ENCODE measurements at regions of chr7 and their contacts with region 1.

Region 1: DNA sequence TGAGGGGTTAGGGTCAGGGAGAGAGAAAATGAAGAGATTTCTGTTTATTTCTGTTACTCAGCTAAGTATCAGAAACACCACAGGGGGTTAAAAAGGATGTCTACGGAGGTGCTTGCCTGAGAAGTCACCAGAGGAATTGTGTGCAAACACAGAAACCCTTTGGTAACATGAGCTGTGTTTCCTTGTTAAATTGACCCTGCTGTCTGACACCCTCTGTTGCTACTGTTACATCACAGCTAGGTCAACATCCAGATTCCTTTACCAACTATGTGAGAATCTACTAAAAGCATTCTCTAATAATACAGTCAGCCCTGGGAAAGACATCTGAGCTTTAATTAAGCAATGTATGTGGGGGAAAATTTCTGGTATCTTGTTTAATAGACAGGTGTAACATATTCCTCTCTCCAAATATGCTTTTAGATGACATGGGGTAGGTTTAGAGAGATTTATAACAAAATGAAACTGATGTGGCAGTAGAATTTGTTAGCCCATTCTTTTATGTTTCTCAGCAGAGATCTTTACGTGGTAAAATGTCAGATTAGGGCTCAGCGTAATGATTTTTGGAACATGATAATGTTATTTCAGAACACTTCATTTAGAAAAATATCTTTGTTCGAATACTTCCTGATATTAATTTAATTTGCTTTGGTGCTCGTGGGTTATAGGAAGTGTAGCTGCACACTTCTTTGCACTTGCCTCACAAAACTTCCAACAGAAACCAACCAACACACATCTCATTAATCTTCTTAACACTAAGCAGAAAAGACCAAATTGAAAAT is 168.0 kb upstream of the AHR start:
- DNase-seq: no peak
- ATAC-seq: no peak
- H3K4me3 ChIP-seq: no peak overlapping the region
- H3K27ac ChIP-seq: no peak overlapping the region
- H3K4me1 ChIP-seq: no peaks in the 10 kb centered on the region
- H3K27me3 ChIP-seq: no peaks in the 10 kb centered on the region
- CTCF ChIP-seq: no peak
- EP300 ChIP-seq: no peak
- POLR2A ChIP-seq: no peak
- RAD21 ChIP-seq: 0 out of 4 replicates have a peak, but pooled peaks of 1 of the 2 experiments have one; percentile 4

Region 2: DNA sequence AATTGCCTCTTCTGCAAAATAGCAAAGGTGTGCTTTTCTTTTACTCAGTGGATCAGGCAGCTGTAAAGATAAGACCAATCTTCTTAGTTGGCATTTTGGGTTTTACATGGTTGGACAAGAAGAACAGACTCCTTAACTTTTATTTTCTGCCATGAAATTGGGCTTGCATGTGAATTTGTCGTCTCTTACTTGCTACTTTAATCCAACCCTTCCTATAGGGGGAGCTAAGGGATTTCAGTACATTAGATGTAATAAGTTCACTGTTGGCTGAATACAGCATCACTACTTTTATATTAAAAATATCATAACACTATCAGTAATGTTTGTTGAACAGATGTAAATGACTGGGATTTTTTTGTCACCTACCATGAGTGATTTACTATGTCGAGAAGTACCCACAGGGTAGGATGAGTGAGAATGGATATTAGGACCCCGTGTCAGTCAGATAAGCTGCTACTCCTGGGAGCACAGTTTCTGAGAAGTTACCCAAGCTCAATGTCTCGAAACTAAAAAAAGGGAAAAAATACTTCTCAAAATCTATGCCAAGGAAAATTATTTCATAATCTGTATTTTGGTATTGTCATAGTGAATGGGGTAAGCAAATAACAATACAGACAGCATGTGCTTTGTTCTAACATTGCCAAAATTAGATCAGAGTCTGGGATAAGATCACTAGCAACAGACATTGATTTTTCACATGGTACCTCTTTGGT is 121.3 kb before region 1 on chr7:
- CTCF ChIA-PET with region 1: no interaction called
- POLR2A ChIA-PET with region 1: no interaction called
- in situ Hi-C with region 1: no loop called
- intact Hi-C with region 1: loop called (anchors 10 kb)
- DNase-seq: peak in 1 of 4 experiments; percentile 7
- ATAC-seq: no peak
- H3K4me3 ChIP-seq: no peak overlapping the region
- H3K27ac ChIP-seq: no peak overlapping the region
- H3K4me1 ChIP-seq: no peaks in the 10 kb centered on the region
- H3K27me3 ChIP-seq: no peaks in the 10 kb centered on the region
- CTCF ChIP-seq: peak in 1 of 3 experiments; percentile 31; a peak in 2 of 6 replicates
- EP300 ChIP-seq: no peak
- POLR2A ChIP-seq: no peak
- RAD21 ChIP-seq: peak; percentile 30 to 81; a peak in 3 of 4 replicates

Measured in K562 (cell line).